ENCODE measurements at regions of chr4 and their contacts with region 1.

Region 1: GRCh38 chr4:99054428-99054994 is 34.1 kb downstream of the ADH5 start:
- DNase-seq: no peak
- H3K4me3 Mint-ChIP-seq: no peak overlapping the region
- H3K27ac Mint-ChIP-seq: peak overlapping the region; percentile 73
- H3K4me1 Mint-ChIP-seq: peaks cover 42% of the 10 kb centered on the region
- H3K27me3 Mint-ChIP-seq: no peaks in the 10 kb centered on the region

Region 2: GRCh38 chr4:98260579-98261290 is 793.8 kb before region 1 on chr4:
- CTCF ChIA-PET with region 1: interaction called, 4 read pairs
- POLR2A ChIA-PET with region 1: no interaction called
- intact Hi-C with region 1: loop called (anchors 10 kb)
- DNase-seq: peak; percentile 96
- H3K4me3 Mint-ChIP-seq: peak overlapping the region; percentile 95
- H3K27ac Mint-ChIP-seq: peak overlapping the region; percentile 97
- H3K4me1 Mint-ChIP-seq: peaks cover 43% of the 10 kb centered on the region
- H3K27me3 Mint-ChIP-seq: no peaks in the 10 kb centered on the region

Region 3: GRCh38 chr4:98601708-98602107 is 452.8 kb before region 1 on chr4:
- CTCF ChIA-PET with region 1: interaction called, 4 read pairs
- POLR2A ChIA-PET with region 1: no interaction called
- intact Hi-C with region 1: loop called (anchors 1 kb)
- DNase-seq: peak; percentile 54
- H3K4me3 Mint-ChIP-seq: peak overlapping the region; percentile 54
- H3K27ac Mint-ChIP-seq: peak overlapping the region; percentile 82
- H3K4me1 Mint-ChIP-seq: peaks cover 55% of the 10 kb centered on the region
- H3K27me3 Mint-ChIP-seq: no peaks in the 10 kb centered on the region

Region 4: GRCh38 chr4:98778206-98778605 is 276.3 kb before region 1 on chr4:
- CTCF ChIA-PET with region 1: no interaction called
- POLR2A ChIA-PET with region 1: no interaction called
- intact Hi-C with region 1: no loop called
- DNase-seq: no peak
- H3K4me3 Mint-ChIP-seq: no peak overlapping the region
- H3K27ac Mint-ChIP-seq: no peak overlapping the region
- H3K4me1 Mint-ChIP-seq: no peaks in the 10 kb centered on the region
- H3K27me3 Mint-ChIP-seq: no peaks in the 10 kb centered on the region

Region 5: DNA sequence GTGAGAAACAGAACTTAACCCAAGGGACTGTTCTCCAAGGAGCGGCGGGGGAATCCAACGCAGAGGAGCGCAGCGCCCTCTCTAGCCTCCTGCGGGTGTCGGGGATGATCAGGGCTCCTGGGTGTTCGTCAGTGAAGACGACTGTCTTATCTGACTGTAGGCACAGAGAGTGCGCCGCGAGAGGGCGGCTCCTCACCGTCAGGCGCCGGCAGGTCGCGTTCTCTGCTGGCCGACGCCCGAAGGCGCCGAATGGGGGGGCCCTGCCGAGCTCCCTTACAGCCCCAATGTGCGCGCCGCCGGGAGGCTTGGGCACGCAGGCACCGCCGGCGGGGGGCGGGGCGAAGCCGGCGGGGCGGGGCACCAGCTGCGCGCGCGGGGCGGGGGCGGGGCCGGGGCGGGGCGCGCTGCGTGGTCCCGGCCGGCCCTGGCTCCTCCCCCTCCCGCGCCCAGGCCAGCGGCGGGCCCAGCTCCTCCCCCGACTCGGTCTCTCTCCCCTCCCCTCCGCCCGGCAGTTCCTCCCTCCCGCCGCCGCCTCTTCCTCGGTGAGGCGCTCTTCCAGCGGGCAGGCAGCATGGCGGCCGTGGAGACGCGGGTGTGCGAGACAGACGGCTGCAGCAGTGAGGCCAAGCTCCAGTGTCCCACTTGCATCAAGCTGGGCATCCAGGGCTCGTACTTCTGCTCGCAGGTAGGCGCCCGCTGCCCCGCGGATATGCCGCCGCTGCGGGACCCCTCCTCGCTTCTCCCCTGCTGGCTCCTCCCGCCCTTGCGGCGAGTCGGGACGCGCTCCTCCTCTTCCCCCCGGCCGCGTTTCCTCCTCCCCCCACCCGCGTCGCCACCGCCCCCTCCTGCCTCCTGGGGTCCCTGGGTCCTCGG is 59.1 kb before region 1 on chr4 and contains the start of gene METAP1:
- CTCF ChIA-PET with region 1: interaction called, 216 read pairs
- POLR2A ChIA-PET with region 1: interaction called, 34 read pairs
- intact Hi-C with region 1: loop called (anchors 1 kb)
- DNase-seq: peak; percentile 97
- H3K4me3 Mint-ChIP-seq: peak within 1 kb of the TSS; percentile 88
- H3K27ac Mint-ChIP-seq: peak within 1 kb of the TSS; percentile 96
- H3K4me1 Mint-ChIP-seq: peaks cover 37% of the 10 kb centered on the region
- H3K27me3 Mint-ChIP-seq: no peaks in the 10 kb centered on the region
- total RNA-seq, gene METAP1: 60.7 to 61.1 TPM

Region 6: DNA sequence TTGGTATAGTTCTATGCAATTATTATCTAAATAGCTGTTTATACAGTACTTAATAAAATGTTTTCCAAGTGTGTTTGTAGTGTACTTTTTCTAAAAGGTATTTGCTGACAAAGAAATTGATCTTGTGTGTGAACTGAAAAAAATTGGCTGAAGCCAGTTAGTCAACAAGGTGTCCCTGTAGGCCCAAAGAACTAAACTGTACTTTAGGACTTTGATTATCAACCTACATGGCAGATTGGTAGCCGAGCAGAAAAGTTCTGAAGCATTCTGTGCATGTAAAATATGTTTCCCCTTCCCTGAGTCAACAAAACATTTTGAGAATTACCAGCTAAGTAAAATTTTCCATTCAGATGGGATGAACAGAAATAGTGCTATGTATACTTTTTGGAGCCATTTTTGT is 13.1 kb after region 1 on chr4:
- CTCF ChIA-PET with region 1: interaction called, 19 read pairs
- POLR2A ChIA-PET with region 1: no interaction called
- intact Hi-C with region 1: no loop called
- DNase-seq: no peak
- H3K4me3 Mint-ChIP-seq: no peak overlapping the region
- H3K27ac Mint-ChIP-seq: no peak overlapping the region
- H3K4me1 Mint-ChIP-seq: peaks cover 3% of the 10 kb centered on the region
- H3K27me3 Mint-ChIP-seq: no peaks in the 10 kb centered on the region

Region 7: GRCh38 chr4:99655308-99656081 is 601.0 kb after region 1 on chr4:
- CTCF ChIA-PET with region 1: no interaction called
- POLR2A ChIA-PET with region 1: no interaction called
- intact Hi-C with region 1: no loop called
- DNase-seq: no peak
- H3K4me3 Mint-ChIP-seq: no peak overlapping the region
- H3K27ac Mint-ChIP-seq: no peak overlapping the region
- H3K4me1 Mint-ChIP-seq: no peaks in the 10 kb centered on the region
- H3K27me3 Mint-ChIP-seq: no peaks in the 10 kb centered on the region

Region 8: DNA sequence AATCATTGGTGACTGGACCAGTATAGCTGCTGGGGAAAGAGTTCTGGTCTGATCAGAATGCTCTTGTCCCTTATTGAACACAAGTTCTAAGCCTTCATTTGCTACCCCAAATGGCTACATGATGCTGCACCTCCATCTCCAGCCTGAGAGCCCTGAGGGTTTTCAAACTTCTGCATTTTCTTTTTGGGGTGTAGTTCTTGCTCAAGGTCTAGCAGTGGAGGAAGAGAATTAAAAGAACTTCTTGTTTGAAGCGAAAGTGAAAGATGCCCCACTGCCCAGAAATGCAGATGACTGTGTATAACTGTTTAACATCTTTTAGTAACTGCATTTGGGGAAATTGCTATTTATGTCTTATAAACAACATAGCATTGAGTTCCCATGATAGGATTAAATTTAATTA is 801.2 kb after region 1 on chr4:
- CTCF ChIA-PET with region 1: no interaction called
- POLR2A ChIA-PET with region 1: no interaction called
- intact Hi-C with region 1: loop called (anchors 5 kb)
- DNase-seq: peak; percentile 37
- H3K4me3 Mint-ChIP-seq: no peak overlapping the region
- H3K27ac Mint-ChIP-seq: peak overlapping the region; percentile 7
- H3K4me1 Mint-ChIP-seq: peaks cover 70% of the 10 kb centered on the region
- H3K27me3 Mint-ChIP-seq: no peaks in the 10 kb centered on the region

Measured in activated CD4-positive, alpha-beta memory T cell treated with anti-CD3 and anti-CD28 coated beads for 36 hours (primary cell).